MCF 10A (cell line): ENCODE measurements at regions of chr11 and their contacts with region 1.

Region 1: GRCh38 chr11:124769801-124770639 is 7.9 kb upstream of the ESAM start:
- DNase-seq: peak; percentile 56
- H3K4me3 Mint-ChIP-seq: no peak overlapping the region
- H3K27ac Mint-ChIP-seq: peak overlapping the region; percentile 27
- H3K4me1 Mint-ChIP-seq: no peaks in the 10 kb centered on the region
- H3K27me3 Mint-ChIP-seq: no peaks in the 10 kb centered on the region
- CTCF ChIP-seq: no peak

Region 2: GRCh38 chr11:124793466-124794278 is 23.7 kb after region 1 on chr11:
- CTCF ChIA-PET with region 1: interaction called, 61 read pairs
- POLR2A ChIA-PET with region 1: interaction called, 9 read pairs
- intact Hi-C with region 1: no loop called
- DNase-seq: peak; percentile 73
- H3K4me3 Mint-ChIP-seq: no peak overlapping the region
- H3K27ac Mint-ChIP-seq: no peak overlapping the region
- H3K4me1 Mint-ChIP-seq: peaks cover 25% of the 10 kb centered on the region
- H3K27me3 Mint-ChIP-seq: no peaks in the 10 kb centered on the region
- CTCF ChIP-seq: peak; percentile 60